ENCODE measurements at regions of chr17 and their contacts with region 1.

Region 1: GRCh38 chr17:19648475-19649406 is at the start of gene ALDH3A2:
- DNase-seq: peak; percentile 97
- H3K4me3 Mint-ChIP-seq: peak within 1 kb of the TSS; percentile 97
- H3K27ac Mint-ChIP-seq: peak within 1 kb of the TSS; percentile 97
- H3K4me1 Mint-ChIP-seq: peaks cover 57% of the 10 kb centered on the region
- H3K27me3 Mint-ChIP-seq: no peaks in the 10 kb centered on the region
- CTCF ChIP-seq: no peak
- total RNA-seq, gene ALDH3A2: 40.3 and 50.9 TPM in 2 replicates

Region 2: GRCh38 chr17:19377602-19378392 is 270.9 kb before region 1 on chr17:
- CTCF ChIA-PET with region 1: interaction called, 3 read pairs
- POLR2A ChIA-PET with region 1: interaction called, 17 read pairs
- intact Hi-C with region 1: no loop called
- DNase-seq: peak; percentile 98
- H3K4me3 Mint-ChIP-seq: peak overlapping the region; percentile 94
- H3K27ac Mint-ChIP-seq: peak overlapping the region; percentile 99
- H3K4me1 Mint-ChIP-seq: peaks cover 16% of the 10 kb centered on the region
- H3K27me3 Mint-ChIP-seq: no peaks in the 10 kb centered on the region
- CTCF ChIP-seq: no peak

Region 3: GRCh38 chr17:19513897-19514488 is 134.7 kb before region 1 on chr17:
- CTCF ChIA-PET with region 1: interaction called, 12 read pairs
- POLR2A ChIA-PET with region 1: interaction called, 26 read pairs
- intact Hi-C with region 1: loop called (anchors 1 kb)
- DNase-seq: peak; percentile 76
- H3K4me3 Mint-ChIP-seq: no peak overlapping the region
- H3K27ac Mint-ChIP-seq: no peak overlapping the region
- H3K4me1 Mint-ChIP-seq: no peaks in the 10 kb centered on the region
- H3K27me3 Mint-ChIP-seq: no peaks in the 10 kb centered on the region
- CTCF ChIP-seq: peak; percentile 82

Region 4: DNA sequence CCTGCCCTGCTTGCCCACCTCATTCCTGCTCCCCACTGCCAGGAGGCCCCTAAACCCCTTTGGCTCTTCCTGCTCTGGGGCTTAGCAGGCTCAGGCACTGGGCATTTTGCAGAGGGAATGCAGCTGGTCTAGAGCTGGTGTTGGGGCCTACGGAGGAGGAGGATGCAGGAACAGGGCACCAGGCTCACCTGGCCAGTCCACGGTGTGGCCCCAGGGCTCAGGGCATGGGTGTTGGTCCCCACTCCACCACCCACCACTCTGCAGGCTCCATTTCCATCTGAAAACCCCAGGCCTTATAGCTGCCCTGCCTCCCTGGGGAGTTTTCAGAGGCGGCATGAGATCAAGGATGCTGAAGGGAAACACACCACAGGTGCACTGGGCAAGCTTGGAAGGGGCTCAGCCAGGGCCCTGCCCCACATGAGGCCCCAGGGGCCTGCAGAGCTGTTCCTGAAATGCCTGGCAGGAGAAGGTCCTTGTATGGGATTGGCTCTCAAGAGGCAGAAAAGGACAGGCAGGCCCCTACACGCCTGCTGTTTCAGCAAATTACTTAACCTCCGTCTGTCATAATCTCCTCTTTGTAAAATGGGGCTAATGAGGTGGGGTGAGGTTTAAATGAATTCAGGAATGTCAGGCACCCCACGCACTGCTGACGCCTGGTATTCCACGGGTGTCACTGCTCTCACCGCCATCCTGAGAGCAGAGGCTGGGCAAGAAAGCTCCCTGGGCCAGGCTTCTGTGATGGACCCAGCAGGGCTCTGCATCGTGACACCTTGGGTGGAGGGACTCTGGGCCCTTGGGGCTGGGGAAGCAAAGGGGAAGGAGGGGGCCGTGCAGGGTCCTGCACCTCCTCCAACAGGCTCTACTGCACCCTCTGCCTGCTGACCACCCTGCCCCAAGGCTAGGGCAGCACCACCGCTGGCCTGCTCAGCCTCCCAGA is 58.3 kb after region 1 on chr17:
- CTCF ChIA-PET with region 1: interaction called, 5 read pairs
- POLR2A ChIA-PET with region 1: interaction called, 40 read pairs
- intact Hi-C with region 1: no loop called
- DNase-seq: peak; percentile 87
- H3K4me3 Mint-ChIP-seq: no peak overlapping the region
- H3K27ac Mint-ChIP-seq: peak overlapping the region; percentile 27
- H3K4me1 Mint-ChIP-seq: peaks cover 10% of the 10 kb centered on the region
- H3K27me3 Mint-ChIP-seq: no peaks in the 10 kb centered on the region
- CTCF ChIP-seq: no peak

Region 5: DNA sequence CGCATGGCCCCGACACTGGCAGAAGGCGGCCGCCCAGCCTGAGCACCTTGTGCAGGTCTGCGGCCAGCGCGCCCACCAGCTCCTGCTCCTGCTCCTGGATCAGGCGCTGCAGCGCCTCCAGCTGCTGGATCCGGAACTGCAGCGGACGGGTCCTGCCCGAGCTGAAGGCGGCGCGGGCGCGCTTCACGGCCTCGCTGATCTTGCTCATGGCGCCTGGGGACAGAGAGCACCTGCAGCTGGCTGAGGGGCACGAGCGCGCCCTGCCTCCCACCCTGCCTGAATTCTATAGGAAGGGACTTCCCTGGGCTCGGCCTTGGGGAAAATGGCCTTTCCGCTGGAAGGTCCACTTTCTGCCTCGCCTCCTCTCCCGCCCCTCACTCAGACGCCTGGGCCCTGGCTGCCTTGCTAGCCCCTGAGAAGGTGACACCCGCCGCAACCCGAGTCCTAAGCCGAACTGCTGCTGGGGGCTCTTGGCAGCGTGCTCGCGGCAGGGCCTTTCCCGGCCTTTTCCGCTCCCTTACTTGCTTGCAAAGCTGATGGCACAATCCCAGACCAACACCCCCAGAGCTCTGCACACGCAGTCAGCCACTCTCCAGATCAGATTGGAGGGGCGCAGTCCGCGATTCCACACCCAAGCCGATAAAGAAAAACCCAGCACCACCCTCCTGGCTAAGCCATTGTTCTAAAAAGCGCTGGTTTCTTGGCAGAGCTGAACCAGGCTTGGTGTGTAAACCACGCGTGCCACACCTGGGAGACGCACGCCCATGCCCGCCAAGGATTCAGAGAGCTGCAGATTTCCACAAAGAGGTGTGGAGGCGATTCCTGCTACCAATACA is 96.4 kb after region 1 on chr17:
- CTCF ChIA-PET with region 1: interaction called, 3 read pairs
- POLR2A ChIA-PET with region 1: interaction called, 39 read pairs
- intact Hi-C with region 1: no loop called
- DNase-seq: peak; percentile 66
- H3K4me3 Mint-ChIP-seq: peak overlapping the region; percentile 29
- H3K27ac Mint-ChIP-seq: peak overlapping the region; percentile 39
- H3K4me1 Mint-ChIP-seq: peaks cover 42% of the 10 kb centered on the region
- H3K27me3 Mint-ChIP-seq: no peaks in the 10 kb centered on the region
- CTCF ChIP-seq: peak; percentile 74

Region 6: GRCh38 chr17:19766422-19767270 is 117.9 kb after region 1 on chr17:
- CTCF ChIA-PET with region 1: interaction called, 16 read pairs
- POLR2A ChIA-PET with region 1: interaction called, 10 read pairs
- intact Hi-C with region 1: no loop called
- DNase-seq: peak; percentile 74
- H3K4me3 Mint-ChIP-seq: no peak overlapping the region
- H3K27ac Mint-ChIP-seq: no peak overlapping the region
- H3K4me1 Mint-ChIP-seq: peaks cover 5% of the 10 kb centered on the region
- H3K27me3 Mint-ChIP-seq: no peaks in the 10 kb centered on the region
- CTCF ChIP-seq: peak; percentile 99

Region 7: GRCh38 chr17:19833914-19834313 is 185.2 kb after region 1 on chr17:
- CTCF ChIA-PET with region 1: no interaction called
- POLR2A ChIA-PET with region 1: no interaction called
- intact Hi-C with region 1: no loop called
- DNase-seq: no peak
- H3K4me3 Mint-ChIP-seq: no peak overlapping the region
- H3K27ac Mint-ChIP-seq: no peak overlapping the region
- H3K4me1 Mint-ChIP-seq: no peaks in the 10 kb centered on the region
- H3K27me3 Mint-ChIP-seq: no peaks in the 10 kb centered on the region
- CTCF ChIP-seq: no peak